Activated CD8-positive, alpha-beta T cell treated with anti-CD3 and anti-CD28 coated beads for 36 hours (primary cell): ENCODE measurements at regions of chr7 and their contacts with region 1.

Region 1: GRCh38 chr7:92768501-92769393 is 67.6 kb downstream of the CDK6 start:
- DNase-seq: peak; percentile 65
- ATAC-seq: peak; percentile 92
- H3K4me3 Mint-ChIP-seq: peak overlapping the region; percentile 6
- H3K27ac Mint-ChIP-seq: peak overlapping the region; percentile 84
- H3K4me1 Mint-ChIP-seq: peaks cover 56% of the 10 kb centered on the region
- H3K27me3 Mint-ChIP-seq: no peaks in the 10 kb centered on the region
- CTCF ChIP-seq: no peak

Region 2: GRCh38 chr7:92691578-92691977 is 77.2 kb before region 1 on chr7:
- CTCF ChIA-PET with region 1: interaction called, 5 read pairs
- POLR2A ChIA-PET with region 1: no interaction called
- intact Hi-C with region 1: loop called (anchors 2 kb)
- DNase-seq: peak; percentile 40
- ATAC-seq: peak; percentile 92
- H3K4me3 Mint-ChIP-seq: no peak overlapping the region
- H3K27ac Mint-ChIP-seq: peak overlapping the region; percentile 59
- H3K4me1 Mint-ChIP-seq: peaks cover 56% of the 10 kb centered on the region
- H3K27me3 Mint-ChIP-seq: no peaks in the 10 kb centered on the region
- CTCF ChIP-seq: peak; percentile 66

Region 3: DNA sequence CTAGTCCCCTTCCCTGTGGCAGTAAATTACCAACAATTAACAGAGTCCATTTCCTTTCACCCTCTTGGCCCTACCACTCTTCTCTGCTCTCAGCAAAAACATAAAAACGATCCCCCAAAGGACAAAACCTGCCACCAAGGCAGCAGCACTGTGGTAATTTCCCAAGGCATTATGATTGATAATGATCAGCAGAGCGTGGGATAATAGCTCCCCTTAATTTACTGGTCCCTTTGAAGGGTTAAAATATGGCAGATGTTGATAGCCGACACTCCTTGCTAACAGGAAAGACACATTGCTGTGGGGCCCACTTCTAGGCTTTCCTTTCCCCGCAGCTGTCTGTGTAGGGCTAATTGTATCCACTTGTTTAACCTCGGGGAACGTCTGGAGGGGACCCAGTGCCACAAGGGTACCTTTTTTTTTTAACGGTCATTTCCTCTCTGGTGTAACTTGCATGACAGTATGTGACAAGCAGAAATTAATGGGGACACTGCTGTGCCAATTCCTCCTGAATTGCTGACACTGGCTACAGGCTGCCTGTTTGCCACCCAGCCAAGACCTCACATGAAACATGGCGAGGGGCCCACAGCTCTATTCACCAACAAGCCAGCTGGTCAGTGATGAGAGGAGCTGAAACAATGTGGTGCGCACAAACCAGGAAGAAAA is 13.7 kb before region 1 on chr7:
- CTCF ChIA-PET with region 1: interaction called, 14 read pairs
- POLR2A ChIA-PET with region 1: no interaction called
- intact Hi-C with region 1: no loop called
- DNase-seq: no peak
- ATAC-seq: no peak
- H3K4me3 Mint-ChIP-seq: no peak overlapping the region
- H3K27ac Mint-ChIP-seq: peak overlapping the region; percentile 7
- H3K4me1 Mint-ChIP-seq: peaks cover 44% of the 10 kb centered on the region
- H3K27me3 Mint-ChIP-seq: no peaks in the 10 kb centered on the region
- CTCF ChIP-seq: no peak

Region 4: DNA sequence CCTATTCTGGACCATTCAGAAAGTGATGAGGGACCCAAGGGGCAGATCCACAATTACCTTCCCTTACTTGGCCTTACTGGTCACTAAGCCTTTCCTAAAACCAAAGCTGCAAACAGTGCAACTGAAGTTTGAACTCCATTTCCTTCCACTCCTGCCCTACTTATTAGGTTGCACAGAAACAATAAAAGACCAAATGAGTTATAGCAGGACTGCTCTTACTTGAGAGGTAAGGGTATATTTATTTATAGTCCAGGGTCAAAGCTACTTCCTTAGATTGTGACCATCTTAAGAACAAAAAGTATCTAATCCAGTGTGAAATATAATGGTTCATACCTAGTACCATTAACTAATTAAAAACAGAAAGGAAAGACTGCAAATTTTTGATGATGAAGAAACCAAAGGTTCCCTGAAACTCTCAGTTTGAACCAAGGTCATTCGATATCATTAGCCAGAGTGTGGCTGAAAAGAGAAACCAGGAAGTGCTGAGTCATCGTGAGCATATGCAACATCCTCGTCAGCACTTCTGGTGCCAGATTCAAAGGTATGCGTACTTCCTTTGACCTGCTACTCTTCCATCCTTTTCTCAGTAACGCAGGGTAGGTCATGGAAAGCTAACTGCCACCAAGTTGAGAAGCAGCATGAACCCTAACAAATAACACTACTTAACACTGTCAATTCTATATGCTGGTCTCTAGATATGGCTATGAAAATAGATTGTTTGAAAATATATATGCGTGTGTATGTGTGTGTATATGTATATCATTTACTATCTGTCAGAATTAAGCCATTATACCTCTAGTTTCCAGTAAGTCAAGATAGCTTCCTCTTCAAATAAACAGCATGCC is 40.9 kb after region 1 on chr7:
- CTCF ChIA-PET with region 1: no interaction called
- POLR2A ChIA-PET with region 1: interaction called, 4 read pairs
- intact Hi-C with region 1: loop called (anchors 5 kb)
- DNase-seq: peak; percentile 81
- ATAC-seq: peak; percentile 64
- H3K4me3 Mint-ChIP-seq: peak overlapping the region; percentile 38
- H3K27ac Mint-ChIP-seq: peak overlapping the region; percentile 92
- H3K4me1 Mint-ChIP-seq: peaks cover 69% of the 10 kb centered on the region
- H3K27me3 Mint-ChIP-seq: no peaks in the 10 kb centered on the region
- CTCF ChIP-seq: no peak